Right ventricle myocardium inferior (tissue), 1 donor: ENCODE measurements at regions of chr16 and their contacts with region 1.

Region 1: DNA sequence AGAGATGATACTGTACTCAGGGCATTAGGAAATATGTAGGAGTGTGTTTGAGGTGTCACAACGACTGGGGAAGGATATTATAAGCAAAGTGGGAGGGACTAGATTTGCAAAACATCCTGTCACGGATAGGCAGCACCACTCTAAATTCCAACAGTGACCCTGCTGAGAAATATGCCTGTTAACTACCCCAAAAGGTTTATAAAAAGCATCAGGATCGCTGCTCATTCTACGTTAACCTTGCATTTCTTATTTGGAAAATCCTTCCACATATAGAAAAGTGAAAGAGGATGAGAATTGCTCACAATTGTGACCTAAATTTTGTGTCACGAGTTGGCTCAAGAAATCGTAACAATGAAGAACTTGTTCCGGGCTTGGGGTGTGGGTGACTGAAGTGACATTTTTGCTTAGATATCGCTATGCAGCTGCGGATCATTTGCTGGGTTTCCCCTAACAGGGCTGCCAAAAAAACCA is 51.6 kb downstream of the N4BP1 start:
- DNase-seq: no peak
- ATAC-seq: peak; percentile 63

Region 2: DNA sequence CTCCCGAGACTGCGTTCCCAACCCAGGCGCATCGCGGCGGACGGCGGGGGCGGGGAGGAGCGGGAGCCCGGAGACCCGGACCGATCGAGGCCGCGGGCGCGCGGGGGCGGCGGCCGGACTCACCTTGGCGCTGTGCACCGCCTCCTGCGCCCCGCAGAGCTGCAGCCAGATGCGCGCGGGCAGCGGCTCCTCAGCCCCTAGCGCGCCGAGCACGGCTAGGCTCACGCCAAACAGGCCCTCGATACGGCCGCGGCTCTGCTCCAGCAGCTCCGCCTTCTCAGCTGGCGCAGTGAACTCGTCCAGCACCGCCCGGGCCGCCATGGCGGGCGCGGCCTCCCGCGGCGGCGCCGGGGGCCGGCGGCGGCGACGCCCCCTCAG is 51.2 kb after region 1 on chr16:
- intact Hi-C with region 1: loop called (anchors 2 kb)
- DNase-seq: peak; percentile 92
- ATAC-seq: peak; percentile 81